Cardiac septum (tissue), 1 donor: ENCODE measurements at regions of chr19 and their contacts with region 1.

Region 1: GRCh38 chr19:52527134-52527955 is at the start of gene ZNF808:
- DNase-seq: peak; percentile 98
- total RNA-seq, gene ZNF808: 30.5 TPM

Region 2: DNA sequence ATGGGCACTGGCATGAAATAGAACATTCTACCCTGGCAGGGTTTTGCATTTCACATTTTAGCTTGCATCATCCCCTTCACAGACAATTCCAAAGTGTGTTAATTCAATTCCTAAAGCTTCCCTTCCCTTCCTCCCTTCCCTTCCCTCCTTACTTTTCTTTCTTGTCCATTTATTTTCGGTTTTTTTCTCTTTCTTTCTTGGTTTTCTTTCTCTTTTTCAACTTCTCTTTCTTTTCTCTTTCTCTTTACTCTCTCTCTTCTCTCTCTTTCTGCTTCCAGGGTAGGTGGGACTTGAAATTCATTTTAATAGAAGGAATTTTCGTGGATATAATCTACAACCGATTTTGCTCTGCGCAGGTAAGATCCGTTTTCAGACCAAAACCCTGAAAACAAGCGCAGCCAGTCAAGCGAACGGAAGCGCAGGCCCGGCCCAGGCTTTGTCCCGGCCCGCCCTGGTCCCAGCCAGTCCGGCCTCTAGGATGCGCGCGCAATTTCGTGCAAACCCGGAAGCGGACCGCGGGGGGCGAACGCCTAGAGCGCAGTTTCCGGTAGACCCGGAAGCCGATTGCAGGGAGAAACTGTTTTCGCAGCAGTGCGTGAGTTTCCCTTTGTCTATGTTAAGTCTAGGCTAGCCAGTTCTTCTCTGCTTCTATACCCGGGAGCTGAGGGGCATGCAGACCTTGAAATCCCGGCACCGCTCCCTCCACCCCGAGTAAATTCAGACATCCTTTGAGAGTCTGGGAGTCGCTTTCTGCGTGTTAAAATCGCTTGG is 129.8 kb before region 1 on chr19 and contains the start of gene ZNF528:
- intact Hi-C with region 1: loop called (anchors 5 kb)
- DNase-seq: peak; percentile 98
- total RNA-seq, gene ZNF528: 21.5 TPM

Region 3: GRCh38 chr19:52494521-52494920 is 32.8 kb before region 1 on chr19:
- intact Hi-C with region 1: no loop called
- DNase-seq: no peak

Region 4: DNA sequence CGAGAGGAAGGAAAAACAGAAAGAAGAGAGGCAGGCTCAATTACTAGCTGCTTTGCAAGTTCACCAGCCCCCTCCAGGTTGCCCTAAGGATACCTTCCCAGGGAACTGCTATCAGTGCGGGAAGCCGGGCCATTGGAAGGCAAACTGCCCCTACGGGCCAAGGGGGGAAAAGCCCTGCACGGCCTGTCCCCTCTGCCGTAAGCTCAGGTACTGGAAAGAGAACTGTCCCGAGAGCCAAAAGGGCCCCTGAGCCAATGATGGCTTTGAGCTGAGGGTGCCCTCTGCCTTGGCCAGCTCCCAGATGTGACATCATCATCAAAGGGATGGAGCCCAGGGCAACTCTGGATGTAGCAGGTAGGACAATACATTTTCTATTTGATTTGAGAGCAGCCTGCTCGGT is 483.2 kb after region 1 on chr19:
- intact Hi-C with region 1: no loop called
- DNase-seq: no peak